Sciatic nerve (tissue), 2 donors: ENCODE measurements at regions of chr7 and their contacts with region 1.

Region 1: GRCh38 chr7:7424151-7424873 is 111.4 kb downstream of the COL28A1 start:
- DNase-seq: peak; percentile 80
- ATAC-seq: peak; percentile 87

Region 2: DNA sequence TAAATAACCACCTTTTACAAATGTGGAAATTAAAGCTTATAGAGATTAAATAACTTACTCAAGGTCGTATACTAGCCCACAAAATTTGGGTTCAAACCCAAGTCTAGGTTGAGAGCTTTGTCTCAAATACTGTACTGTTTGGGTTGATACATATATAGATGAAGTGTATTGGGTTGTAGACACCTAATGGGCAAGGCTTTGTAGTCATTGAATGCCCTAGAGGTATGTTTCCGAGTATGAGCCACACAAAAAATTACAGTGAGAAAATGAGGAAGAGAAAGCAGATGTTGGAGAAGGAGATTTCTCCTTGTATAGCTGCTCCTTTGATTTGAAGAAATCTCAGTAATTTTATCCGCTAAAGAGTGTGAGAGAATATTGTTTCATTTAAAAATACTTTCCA is 181.4 kb before region 1 on chr7:
- intact Hi-C with region 1: no loop called
- DNase-seq: no peak
- ATAC-seq: no peak

Region 3: DNA sequence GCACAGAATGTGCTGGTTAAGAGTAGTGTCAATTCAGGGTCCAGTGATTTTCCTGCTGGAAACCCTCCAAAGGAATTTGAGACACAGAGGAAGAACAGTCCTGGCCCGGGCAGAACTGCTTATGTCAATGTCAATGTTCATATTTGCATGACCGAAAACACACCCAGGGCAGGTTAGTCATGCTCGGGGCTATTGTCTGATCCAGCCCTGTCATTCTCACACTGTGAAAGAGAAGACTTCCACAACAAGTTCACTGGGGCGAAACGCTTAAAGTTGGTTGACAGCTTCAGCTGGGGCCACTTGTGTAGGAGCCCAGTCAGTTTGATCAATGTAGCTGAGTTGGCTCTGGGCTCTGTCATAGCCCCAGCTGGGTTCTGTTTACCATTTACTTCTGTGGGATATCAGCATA is 102.6 kb before region 1 on chr7:
- intact Hi-C with region 1: no loop called
- DNase-seq: no peak
- ATAC-seq: no peak

Region 4: DNA sequence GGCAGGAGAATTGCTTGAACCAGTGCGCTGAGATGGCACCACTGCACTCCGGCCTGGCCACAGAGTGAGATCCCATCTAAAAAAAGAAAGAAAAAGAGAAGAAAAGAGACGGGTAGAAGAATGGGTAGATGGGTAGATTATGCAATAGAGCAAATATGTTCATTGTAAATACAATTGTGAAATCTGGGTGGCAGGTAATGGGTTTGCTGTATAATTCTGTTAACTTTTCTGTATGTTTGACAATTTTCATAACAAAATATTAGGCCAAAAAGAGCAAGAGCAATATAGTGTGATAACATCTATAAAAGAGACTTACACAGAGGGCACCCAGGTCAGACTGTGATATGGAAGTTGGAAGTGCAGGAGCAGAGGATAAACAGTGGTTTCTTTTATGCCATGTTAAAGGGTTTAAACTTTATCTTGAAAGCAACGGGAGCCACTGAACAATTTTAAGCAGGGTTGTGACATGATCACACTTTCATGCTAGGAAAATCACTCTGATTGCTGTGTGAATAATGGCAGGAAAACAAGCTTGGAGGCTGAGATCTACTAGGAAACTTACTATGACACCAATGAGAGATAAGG is 118.0 kb after region 1 on chr7:
- intact Hi-C with region 1: loop called (anchors 5 kb)
- DNase-seq: no peak
- ATAC-seq: no peak